ENCODE measurements at regions of chr10 and their contacts with region 1.

Region 1: DNA sequence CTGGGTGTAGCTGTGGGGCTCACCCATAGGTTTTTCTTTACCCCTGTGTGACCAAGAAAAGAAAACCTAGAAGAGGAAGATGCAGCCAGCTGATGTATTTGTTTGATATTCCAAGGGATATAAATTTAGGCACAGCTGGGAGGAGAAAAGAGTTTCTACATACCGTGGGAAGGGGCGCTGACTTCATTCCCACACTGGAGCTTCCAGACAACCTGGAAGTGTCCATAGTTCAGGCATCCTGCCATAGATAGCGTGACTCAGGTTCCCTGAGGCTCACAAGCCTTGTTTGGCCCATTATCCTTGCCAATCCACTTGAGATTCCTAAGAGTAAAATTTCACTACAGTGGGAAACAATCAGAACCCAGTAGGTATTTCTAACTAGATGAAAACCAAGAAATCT is 371.7 kb upstream of the NRP1 start:
- DNase-seq: peak; percentile 99
- ATAC-seq: peak; percentile 44
- H3K4me3 ChIP-seq: no peak overlapping the region
- H3K27ac ChIP-seq: peak overlapping the region; percentile 74
- H3K4me1 ChIP-seq: peaks cover 40% of the 10 kb centered on the region
- H3K27me3 ChIP-seq: no peaks in the 10 kb centered on the region
- CTCF ChIP-seq: no peak

Region 2: DNA sequence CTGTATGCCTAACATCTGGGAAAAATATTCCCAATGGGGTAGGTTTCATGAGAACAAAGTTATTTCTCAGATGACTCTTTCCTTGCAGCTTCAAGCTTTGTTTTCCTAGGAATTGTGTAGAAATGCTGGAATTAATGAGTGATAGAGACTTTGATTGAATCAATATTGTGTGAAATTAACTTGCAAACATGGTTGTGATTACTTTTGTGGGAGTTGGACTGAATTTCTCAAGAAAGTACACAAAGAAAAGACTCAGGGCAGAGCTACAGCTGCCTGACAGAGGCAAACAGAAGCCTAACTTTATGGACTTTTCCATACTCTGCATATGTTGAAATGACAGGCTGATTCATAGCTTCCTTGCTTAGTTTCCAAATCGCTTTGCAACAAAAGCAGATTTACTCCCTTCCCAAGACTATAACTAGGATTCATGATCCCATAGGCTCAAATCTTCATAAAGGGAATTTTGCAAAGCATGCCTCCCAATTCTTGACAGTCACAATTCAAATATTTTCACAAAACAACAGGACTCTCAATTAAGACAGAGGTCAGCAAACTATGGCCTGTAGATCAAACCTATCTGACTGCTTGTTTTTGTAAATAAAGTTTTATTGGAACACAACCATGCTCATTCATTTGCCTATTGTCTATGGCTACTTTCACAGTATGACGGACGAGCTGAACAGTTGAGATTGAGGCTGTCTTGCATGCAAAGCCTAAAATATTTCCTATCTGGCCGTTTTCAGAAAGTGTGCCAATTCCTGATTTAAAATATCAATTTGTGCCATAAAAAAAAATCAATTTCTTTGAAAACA is 399.3 kb before region 1 on chr10:
- CTCF ChIA-PET with region 1: no interaction called
- POLR2A ChIA-PET with region 1: interaction called, 18 read pairs
- intact Hi-C with region 1: no loop called
- DNase-seq: peak; percentile 86
- ATAC-seq: peak; percentile 59
- H3K4me3 ChIP-seq: no peak overlapping the region
- H3K27ac ChIP-seq: peak overlapping the region; percentile 52
- H3K4me1 ChIP-seq: peaks cover 21% of the 10 kb centered on the region
- H3K27me3 ChIP-seq: no peaks in the 10 kb centered on the region
- CTCF ChIP-seq: no peak

Region 3: DNA sequence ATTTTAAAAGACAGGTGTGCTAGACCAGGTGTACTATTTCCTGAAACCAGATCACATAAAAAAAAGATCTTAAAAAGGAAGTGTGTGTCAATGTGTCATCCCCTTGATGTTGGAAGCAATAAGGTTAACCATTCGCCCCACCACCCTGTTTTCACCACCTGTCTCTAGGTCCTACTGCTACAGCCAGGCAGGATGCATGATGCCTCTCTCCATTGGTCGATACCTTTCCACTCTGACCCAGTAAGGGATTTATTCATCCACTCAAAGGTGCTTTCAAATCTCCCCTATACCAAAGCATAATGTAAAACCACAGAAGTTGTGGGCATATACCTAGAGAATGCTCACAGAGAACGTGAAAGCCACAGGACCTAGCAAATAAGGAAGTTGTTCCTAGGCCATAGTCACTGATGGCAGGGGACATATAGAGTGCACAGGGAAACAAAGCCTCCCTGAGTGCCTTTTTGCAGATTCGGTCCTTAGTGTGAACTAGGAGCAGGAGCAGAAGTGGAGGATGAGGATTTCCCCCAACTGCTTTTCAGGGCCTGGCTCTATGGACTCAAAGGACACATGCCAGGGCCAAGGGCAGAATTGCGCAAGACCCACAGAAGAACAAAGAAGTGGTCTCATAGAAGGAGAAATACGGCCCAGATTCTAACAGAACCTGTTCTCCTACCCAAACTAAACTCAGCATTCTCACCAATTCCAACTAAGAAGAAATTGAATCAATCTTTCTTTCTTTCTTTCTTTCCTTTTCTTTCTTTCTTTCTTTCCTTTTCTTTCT is 259.8 kb after region 1 on chr10:
- CTCF ChIA-PET with region 1: no interaction called
- POLR2A ChIA-PET with region 1: no interaction called
- intact Hi-C with region 1: loop called (anchors 10 kb)
- DNase-seq: no peak
- ATAC-seq: no peak
- H3K4me3 ChIP-seq: no peak overlapping the region
- H3K27ac ChIP-seq: no peak overlapping the region
- H3K4me1 ChIP-seq: peaks cover 12% of the 10 kb centered on the region
- H3K27me3 ChIP-seq: no peaks in the 10 kb centered on the region
- CTCF ChIP-seq: no peak

Measured in PC-3 (cell line).